Activated CD4-positive, alpha-beta T cell treated with anti-CD3 and anti-CD28 coated beads, Interleukin-2, amount 10 ng/mL, durations not matched to agents 24 days and 14 days (primary cell): ENCODE measurements at regions of chr3 and their contacts with region 1.

Region 1: GRCh38 chr3:12193485-12194165 is 34.9 kb upstream of the TIMP4 start:
- DNase-seq: peak; percentile 79
- H3K4me3 Mint-ChIP-seq: peak overlapping the region; percentile 65
- H3K27ac Mint-ChIP-seq: peak overlapping the region; percentile 93
- H3K4me1 Mint-ChIP-seq: peaks cover 77% of the 10 kb centered on the region
- H3K27me3 Mint-ChIP-seq: no peaks in the 10 kb centered on the region

Region 2: DNA sequence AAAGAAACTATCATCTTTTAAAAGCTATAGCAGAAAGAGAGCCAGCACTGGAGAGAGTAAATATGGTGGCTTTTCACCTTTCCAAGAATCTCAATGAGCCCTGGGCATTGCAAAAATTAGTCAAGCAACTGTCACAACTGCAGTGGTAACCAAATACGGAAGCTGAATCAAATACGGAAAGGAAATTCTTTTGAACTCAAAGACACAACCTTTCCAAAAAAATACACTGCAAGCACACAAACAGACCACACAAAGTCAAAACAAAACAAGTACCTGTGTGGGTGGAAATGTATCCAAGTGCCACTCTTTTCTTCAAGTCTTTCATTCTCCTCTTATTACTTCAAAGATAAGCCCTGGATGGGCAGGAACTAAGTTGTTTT is 567.6 kb before region 1 on chr3:
- intact Hi-C with region 1: loop called (anchors 10 kb)
- DNase-seq: peak; percentile 81
- H3K4me3 Mint-ChIP-seq: peak overlapping the region; percentile 57
- H3K27ac Mint-ChIP-seq: peak overlapping the region; percentile 77
- H3K4me1 Mint-ChIP-seq: peaks cover 56% of the 10 kb centered on the region
- H3K27me3 Mint-ChIP-seq: no peaks in the 10 kb centered on the region

Region 3: DNA sequence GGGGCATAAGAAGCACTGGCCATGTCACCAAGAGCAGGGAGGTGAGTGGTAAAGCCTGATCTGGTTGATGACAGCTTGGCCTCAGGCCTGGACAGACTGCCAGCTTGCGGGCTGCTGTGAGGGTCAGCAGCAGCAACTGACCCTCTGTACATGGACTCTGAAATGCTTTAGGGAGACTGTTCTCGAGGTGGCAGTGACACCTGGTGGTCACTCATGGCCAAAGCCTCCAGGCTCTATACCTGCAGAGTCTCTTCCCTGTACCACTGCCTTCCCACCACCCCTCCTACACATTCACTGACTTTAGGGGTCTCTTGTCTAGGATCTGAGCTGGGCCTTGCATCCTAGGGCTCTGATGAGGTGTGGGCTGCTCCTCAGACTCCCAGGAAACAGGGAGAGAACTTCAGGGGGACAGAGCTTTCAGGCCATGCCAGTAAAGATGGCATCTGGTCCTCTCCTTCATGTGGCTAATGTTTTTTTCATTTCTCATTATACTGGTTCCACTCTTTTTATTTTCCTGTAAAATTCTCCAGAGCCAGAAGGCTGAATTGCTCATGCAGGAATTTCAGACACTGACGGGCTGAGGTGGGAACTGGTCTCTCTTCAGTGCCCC is 17.7 kb before region 1 on chr3:
- intact Hi-C with region 1: loop called (anchors 1 kb)
- DNase-seq: peak; percentile 72
- H3K4me3 Mint-ChIP-seq: no peak overlapping the region
- H3K27ac Mint-ChIP-seq: no peak overlapping the region
- H3K4me1 Mint-ChIP-seq: peaks cover 15% of the 10 kb centered on the region
- H3K27me3 Mint-ChIP-seq: no peaks in the 10 kb centered on the region

Region 4: GRCh38 chr3:12308517-12308916 is 114.9 kb after region 1 on chr3:
- intact Hi-C with region 1: loop called (anchors 2 kb)
- DNase-seq: no peak
- H3K4me3 Mint-ChIP-seq: no peak overlapping the region
- H3K27ac Mint-ChIP-seq: peak overlapping the region; percentile 6
- H3K4me1 Mint-ChIP-seq: peaks cover 17% of the 10 kb centered on the region
- H3K27me3 Mint-ChIP-seq: peaks cover 26% of the 10 kb centered on the region

Region 5: GRCh38 chr3:13012228-13012691 is 818.6 kb after region 1 on chr3:
- intact Hi-C with region 1: loop called (anchors 5 kb)
- DNase-seq: peak; percentile 85
- H3K4me3 Mint-ChIP-seq: peak overlapping the region; percentile 75
- H3K27ac Mint-ChIP-seq: peak overlapping the region; percentile 96
- H3K4me1 Mint-ChIP-seq: peaks cover 80% of the 10 kb centered on the region
- H3K27me3 Mint-ChIP-seq: no peaks in the 10 kb centered on the region